ENCODE measurements at regions of chr5 and their contacts with region 1.

Region 1: DNA sequence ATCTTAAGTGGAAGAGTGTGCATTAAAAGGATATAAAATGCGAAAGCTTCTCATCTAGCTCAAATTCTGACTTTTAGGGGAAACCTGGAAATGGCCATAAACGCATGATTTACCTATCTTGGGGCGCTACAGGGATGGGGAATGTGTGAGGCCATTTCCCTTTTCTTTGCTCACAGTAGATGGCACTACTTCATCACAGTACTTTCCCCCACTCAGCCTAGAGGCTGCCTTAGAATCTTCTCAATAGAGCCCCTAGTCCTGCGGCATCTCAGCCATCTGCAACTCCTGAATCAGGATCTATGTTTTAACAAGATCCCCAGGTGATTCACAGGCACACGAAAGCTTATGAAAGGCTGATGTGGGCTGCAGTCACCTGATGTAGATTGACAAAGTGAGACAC is 110.8 kb downstream of the LHFPL2 start:
- DNase-seq: no peak
- ATAC-seq: peak; percentile 67 to 77 (median 70)
- H3K4me3 ChIP-seq: no peak overlapping the region
- H3K27ac ChIP-seq: peak overlapping the region in 2 of 10 donors; percentile 10 to 25
- H3K4me1 ChIP-seq: peaks cover 5 to 82% (median 46%) of the 10 kb centered on the region in 9 donors
- H3K27me3 ChIP-seq: no peaks in the 10 kb centered on the region
- CTCF ChIP-seq: peak in 8 of 9 donors; percentile 43 to 80 (median 62)

Region 2: GRCh38 chr5:78182790-78183189 is 355.0 kb before region 1 on chr5:
- intact Hi-C with region 1: no loop called
- DNase-seq: no peak
- ATAC-seq: no peak
- H3K4me3 ChIP-seq: no peak overlapping the region
- H3K27ac ChIP-seq: no peak overlapping the region
- H3K4me1 ChIP-seq: no peaks in the 10 kb centered on the region
- H3K27me3 ChIP-seq: no peaks in the 10 kb centered on the region
- CTCF ChIP-seq: no peak

Region 3: GRCh38 chr5:78467752-78468357 is 70.0 kb before region 1 on chr5:
- intact Hi-C with region 1: loop called in 5 of 10 experiments (anchors 5 to 10 kb)
- DNase-seq: no peak
- ATAC-seq: peak in 6 of 8 donors; percentile 53 to 82 (median 64)
- H3K4me3 ChIP-seq: no peak overlapping the region
- H3K27ac ChIP-seq: no peak overlapping the region
- H3K4me1 ChIP-seq: peaks cover 0 to 4% (median 0%) of the 10 kb centered on the region in 9 donors
- H3K27me3 ChIP-seq: no peaks in the 10 kb centered on the region
- CTCF ChIP-seq: peak; percentile 63 to 88 (median 79)

Region 4: GRCh38 chr5:78648359-78649210 is 110.8 kb after region 1 on chr5 and contains the start of gene LHFPL2:
- intact Hi-C with region 1: loop called in 3 of 10 experiments (anchors 5 to 10 kb)
- DNase-seq: peak; percentile 72 to 82
- ATAC-seq: peak; percentile 74 to 92 (median 84)
- H3K4me3 ChIP-seq: peak within 1 kb of the TSS; percentile 70 to 89 (median 80)
- H3K27ac ChIP-seq: peak within 1 kb of the TSS; percentile 76 to 96 (median 94)
- H3K4me1 ChIP-seq: peaks cover 0 to 41% (median 20%) of the 10 kb centered on the region in 9 donors
- H3K27me3 ChIP-seq: peaks cover 0 to 28% (median 0%) of the 10 kb centered on the region in 7 donors
- CTCF ChIP-seq: no peak
- total RNA-seq, gene LHFPL2: 3.8 to 14.9 (median 5.1) TPM

Region 5: DNA sequence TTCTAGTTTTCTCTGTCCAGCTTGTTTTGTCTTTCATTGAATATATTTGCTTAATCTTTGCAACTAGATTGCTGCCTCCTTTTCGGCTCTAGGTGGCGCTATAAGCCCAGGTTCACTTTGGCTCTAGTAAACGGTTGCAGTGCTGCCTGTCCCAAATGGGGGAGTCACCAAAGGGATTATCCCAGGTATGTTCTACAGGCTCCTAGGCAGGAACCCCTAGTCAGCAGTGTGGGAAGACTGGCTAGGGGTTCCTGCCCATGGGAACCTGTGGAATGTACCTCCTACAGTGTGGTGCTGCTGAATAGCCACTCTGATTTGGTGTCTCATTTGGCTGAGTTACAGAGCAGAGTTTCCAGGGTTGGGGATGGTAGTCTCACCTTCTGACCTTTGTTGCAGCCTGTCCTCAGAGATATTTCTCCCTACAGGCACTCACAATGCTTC is 362.1 kb after region 1 on chr5:
- intact Hi-C with region 1: loop called in 6 of 10 experiments (anchors 10 kb)
- DNase-seq: peak in 1 of 2 donors; percentile 43
- ATAC-seq: no peak
- H3K4me3 ChIP-seq: no peak overlapping the region
- H3K27ac ChIP-seq: no peak overlapping the region
- H3K4me1 ChIP-seq: peaks cover 0 to 11% (median 2%) of the 10 kb centered on the region in 9 donors
- H3K27me3 ChIP-seq: no peaks in the 10 kb centered on the region
- CTCF ChIP-seq: peak; percentile 34 to 75 (median 61)

Region 6: DNA sequence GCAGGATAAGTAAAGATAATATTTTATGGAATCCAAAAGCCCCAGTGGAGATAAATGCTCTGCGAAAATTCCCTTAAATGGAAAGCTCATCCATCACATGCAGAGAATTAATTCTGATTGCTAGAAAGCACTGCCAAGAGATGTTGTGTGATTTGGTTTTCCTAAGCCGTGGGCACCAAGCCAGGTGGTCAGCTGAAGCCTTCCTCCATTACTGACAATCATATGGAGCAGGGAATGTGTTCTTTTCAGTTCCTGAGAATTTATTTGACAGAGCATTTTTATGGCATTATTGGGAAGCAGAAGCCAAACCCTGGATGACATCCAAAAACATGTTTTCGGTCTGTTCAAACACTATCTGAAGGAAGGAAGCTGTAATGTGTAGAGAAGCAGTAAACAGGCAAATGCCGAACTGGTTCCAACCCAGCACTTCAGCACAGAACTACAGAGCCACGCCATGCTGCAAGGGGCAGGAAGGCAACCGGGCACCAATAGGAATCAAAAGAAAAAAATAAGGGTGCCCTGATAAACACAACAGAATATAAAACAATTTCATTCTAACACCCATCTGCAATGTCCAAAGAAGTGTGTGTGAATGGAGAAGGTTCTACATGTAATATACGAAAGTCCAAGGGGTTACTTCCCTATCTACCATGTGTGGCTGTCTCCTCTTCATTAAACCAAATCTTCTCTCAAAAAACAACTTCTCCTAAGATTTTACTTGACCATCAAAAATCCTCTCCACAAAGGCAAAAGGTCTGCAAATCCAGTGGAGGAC is 435.0 kb after region 1 on chr5:
- intact Hi-C with region 1: loop called in 5 of 10 experiments (anchors 5 to 10 kb)
- DNase-seq: peak in 1 of 2 donors; percentile 15
- ATAC-seq: peak in 6 of 8 donors; percentile 44 to 75 (median 58)
- H3K4me3 ChIP-seq: peak overlapping the region in 1 of 10 donors; percentile 4
- H3K27ac ChIP-seq: peak overlapping the region in 4 of 10 donors; percentile 1 to 55 (median 14)
- H3K4me1 ChIP-seq: peaks cover 0 to 32% (median 19%) of the 10 kb centered on the region in 9 donors
- H3K27me3 ChIP-seq: no peaks in the 10 kb centered on the region
- CTCF ChIP-seq: no peak

Measured in heart right ventricle (tissue), 16 donors.